ENCODE measurements at regions of chr17 and their contacts with region 1.

Region 1: GRCh38 chr17:29124117-29124924 is 55.9 kb downstream of the MYO18A start:
- DNase-seq: peak; percentile 64
- H3K4me3 Mint-ChIP-seq: peak overlapping the region; percentile 20
- H3K27ac Mint-ChIP-seq: peak overlapping the region; percentile 5
- H3K4me1 Mint-ChIP-seq: peaks cover 17% of the 10 kb centered on the region
- H3K27me3 Mint-ChIP-seq: no peaks in the 10 kb centered on the region
- CTCF ChIP-seq: peak; percentile 41

Region 2: GRCh38 chr17:28967221-28968140 is 156.8 kb before region 1 on chr17:
- CTCF ChIA-PET with region 1: interaction called, 14 read pairs
- intact Hi-C with region 1: no loop called
- DNase-seq: no peak
- H3K4me3 Mint-ChIP-seq: no peak overlapping the region
- H3K27ac Mint-ChIP-seq: no peak overlapping the region
- H3K4me1 Mint-ChIP-seq: peaks cover 10% of the 10 kb centered on the region
- H3K27me3 Mint-ChIP-seq: peaks cover 64% of the 10 kb centered on the region
- CTCF ChIP-seq: no peak

Region 3: GRCh38 chr17:29140051-29140621 is 15.8 kb after region 1 on chr17:
- CTCF ChIA-PET with region 1: interaction called, 37 read pairs
- intact Hi-C with region 1: loop called (anchors 2 kb)
- DNase-seq: peak; percentile 56
- H3K4me3 Mint-ChIP-seq: no peak overlapping the region
- H3K27ac Mint-ChIP-seq: no peak overlapping the region
- H3K4me1 Mint-ChIP-seq: peaks cover 33% of the 10 kb centered on the region
- H3K27me3 Mint-ChIP-seq: no peaks in the 10 kb centered on the region
- CTCF ChIP-seq: no peak

Region 4: DNA sequence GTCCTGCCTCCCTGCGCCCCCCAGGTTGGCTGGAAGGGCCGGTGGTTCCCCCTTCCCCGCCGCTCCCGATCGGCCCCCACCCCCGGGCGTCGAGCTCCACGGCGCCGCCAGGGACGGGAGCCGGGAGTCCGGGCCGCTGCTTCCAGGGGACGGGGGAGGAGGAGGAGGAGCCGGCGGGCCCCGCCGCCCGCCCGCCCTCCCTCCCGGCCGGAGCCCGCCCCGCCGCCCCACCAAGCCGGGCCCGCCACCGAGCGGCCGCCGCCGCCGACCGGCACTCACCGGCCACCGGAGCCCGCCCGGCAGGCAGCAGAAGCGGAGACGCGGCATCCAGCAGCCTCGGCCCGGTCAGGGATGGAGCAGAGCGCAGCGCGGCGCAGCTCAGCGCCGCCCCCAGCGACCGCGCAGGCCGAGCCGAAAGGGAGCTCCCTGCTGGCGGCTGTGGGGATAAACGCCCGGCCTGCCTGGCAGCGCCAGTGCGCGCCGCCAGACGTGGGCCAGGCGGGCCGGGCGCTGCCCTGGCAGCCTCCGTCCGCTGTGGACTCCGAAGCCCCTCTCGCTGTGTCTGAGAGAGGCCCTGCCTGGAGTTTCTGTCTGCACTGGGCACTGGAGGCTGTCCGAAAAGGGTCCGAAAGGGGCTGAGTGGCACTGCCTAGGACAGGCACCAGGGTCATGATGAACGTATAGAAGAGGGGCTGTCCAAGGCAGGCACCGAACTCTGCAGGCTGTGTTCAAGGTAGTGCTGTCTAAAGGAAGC is 55.9 kb after region 1 on chr17 and contains the start of gene MYO18A:
- CTCF ChIA-PET with region 1: interaction called, 35 read pairs
- intact Hi-C with region 1: no loop called
- DNase-seq: peak; percentile 89
- H3K4me3 Mint-ChIP-seq: peak within 1 kb of the TSS; percentile 69
- H3K27ac Mint-ChIP-seq: peak within 1 kb of the TSS; percentile 87
- H3K4me1 Mint-ChIP-seq: peaks cover 38% of the 10 kb centered on the region
- H3K27me3 Mint-ChIP-seq: no peaks in the 10 kb centered on the region
- CTCF ChIP-seq: peak; percentile 92
- total RNA-seq, gene MYO18A: 89.9 and 123 TPM in 2 replicates

Region 5: DNA sequence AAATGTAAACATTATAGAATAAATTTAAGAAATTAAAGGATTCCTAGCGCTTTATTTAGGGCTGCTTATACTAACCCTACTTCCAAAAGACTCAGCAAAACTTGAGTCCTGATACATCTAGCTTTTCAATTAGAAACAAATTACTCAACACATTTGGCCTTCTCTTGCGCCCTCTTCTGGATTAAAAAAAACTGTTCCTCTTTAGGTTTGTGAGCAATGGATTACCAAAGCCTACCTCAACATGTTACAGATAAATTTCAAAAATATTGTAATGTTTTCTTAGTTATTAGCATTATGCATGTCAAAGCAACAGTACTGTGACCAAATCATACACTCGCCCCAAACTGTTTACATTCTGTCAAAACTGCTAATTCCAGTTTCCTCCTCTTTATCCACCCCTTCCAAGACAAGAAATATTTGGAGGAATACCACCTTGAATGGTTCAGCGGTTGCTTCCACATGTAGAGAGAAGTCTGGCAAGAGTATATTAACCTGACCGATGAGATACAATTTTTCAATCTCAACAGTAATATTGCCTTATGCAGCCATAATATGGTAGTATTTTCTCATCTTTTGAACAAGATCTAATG is 166.9 kb after region 1 on chr17:
- CTCF ChIA-PET with region 1: interaction called, 11 read pairs
- intact Hi-C with region 1: no loop called
- DNase-seq: peak; percentile 44
- H3K4me3 Mint-ChIP-seq: peak overlapping the region; percentile 90
- H3K27ac Mint-ChIP-seq: peak overlapping the region; percentile 93
- H3K4me1 Mint-ChIP-seq: peaks cover 39% of the 10 kb centered on the region
- H3K27me3 Mint-ChIP-seq: no peaks in the 10 kb centered on the region
- CTCF ChIP-seq: peak; percentile 34

Region 6: GRCh38 chr17:29303386-29303785 is 179.1 kb after region 1 on chr17:
- CTCF ChIA-PET with region 1: no interaction called
- intact Hi-C with region 1: no loop called
- DNase-seq: no peak
- H3K4me3 Mint-ChIP-seq: no peak overlapping the region
- H3K27ac Mint-ChIP-seq: no peak overlapping the region
- H3K4me1 Mint-ChIP-seq: no peaks in the 10 kb centered on the region
- H3K27me3 Mint-ChIP-seq: no peaks in the 10 kb centered on the region
- CTCF ChIP-seq: no peak

Region 7: DNA sequence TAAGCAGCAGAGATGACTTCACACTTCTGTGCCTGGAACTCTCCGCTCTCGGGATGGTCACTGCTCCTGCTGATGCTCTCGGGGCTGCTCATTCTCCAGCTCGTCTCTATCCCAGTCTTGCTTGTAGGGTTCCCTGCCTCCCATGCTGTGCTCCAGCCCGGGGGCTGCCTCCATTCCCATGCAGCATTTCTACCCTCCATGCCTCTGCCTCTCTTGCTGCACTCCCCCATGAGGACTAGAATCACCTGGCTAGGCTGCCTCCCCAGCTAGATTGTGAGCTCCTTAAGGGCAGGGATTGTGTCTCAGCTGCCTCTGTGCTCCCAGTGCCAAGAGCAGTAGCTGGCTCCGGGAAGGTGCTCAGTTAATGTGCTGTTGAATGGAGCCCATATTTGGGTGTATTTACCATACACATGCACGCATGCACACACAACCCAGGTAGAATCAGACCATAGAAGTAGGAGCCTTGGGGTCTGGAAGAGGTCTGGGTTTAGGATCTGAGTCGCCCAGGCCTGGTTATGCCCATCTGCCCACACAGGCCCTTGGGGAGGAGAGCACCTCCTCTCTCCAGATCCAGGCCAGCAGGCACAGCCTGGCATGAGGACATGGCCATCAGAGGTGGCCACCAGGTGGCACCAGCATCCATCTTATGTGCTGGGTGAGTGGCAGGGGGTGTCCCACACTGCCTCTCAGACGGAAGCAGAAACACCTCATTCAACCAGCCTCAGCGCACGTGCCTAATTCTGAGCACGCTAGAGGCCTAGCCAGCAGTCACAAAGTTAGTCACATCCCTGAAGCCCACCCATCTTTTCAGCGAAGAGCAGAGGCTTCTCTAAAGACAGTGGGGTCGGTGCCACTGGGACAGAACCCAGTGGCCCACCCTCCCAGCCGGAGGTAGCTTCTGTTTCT is 455.8 kb after region 1 on chr17:
- CTCF ChIA-PET with region 1: no interaction called
- intact Hi-C with region 1: no loop called
- DNase-seq: peak; percentile 90
- H3K4me3 Mint-ChIP-seq: no peak overlapping the region
- H3K27ac Mint-ChIP-seq: no peak overlapping the region
- H3K4me1 Mint-ChIP-seq: peaks cover 9% of the 10 kb centered on the region
- H3K27me3 Mint-ChIP-seq: no peaks in the 10 kb centered on the region
- CTCF ChIP-seq: peak; percentile 81